ENCODE measurements at regions of chr1 and their contacts with region 1.

Region 1: GRCh38 chr1:112803906-112804762 is 89.0 kb upstream of the PPM1J start:
- DNase-seq: peak; percentile 61
- ATAC-seq: peak; percentile 97
- H3K4me3 ChIP-seq: no peak overlapping the region
- H3K27ac ChIP-seq: no peak overlapping the region
- H3K4me1 ChIP-seq: no peaks in the 10 kb centered on the region
- H3K27me3 ChIP-seq: no peaks in the 10 kb centered on the region
- CTCF ChIP-seq: peak; percentile 93 to 96 (median 93)
- POLR2A ChIP-seq: no peak
- RAD21 ChIP-seq: peak; percentile 100

Region 2: DNA sequence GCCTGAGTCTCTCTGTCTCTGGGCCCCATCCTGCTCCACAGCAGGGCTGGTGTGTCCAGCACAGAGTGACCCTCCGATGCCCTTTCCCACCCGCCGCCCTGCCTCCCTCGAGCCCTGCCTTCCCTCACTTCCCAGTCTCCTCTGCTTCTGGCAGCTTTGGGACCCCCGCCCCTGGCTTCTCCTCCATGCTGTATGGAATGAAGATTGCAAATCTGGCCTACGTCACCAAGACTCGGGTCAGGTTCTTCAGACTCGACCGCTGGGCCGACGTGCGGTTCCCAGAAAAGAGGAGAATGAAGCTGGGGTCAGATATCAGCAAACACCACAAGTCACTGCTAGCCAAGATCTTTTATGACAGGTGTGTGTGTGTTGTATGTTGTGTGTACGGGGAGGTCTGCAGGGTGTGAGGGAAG is 115.3 kb before region 1 on chr1:
- CTCF ChIA-PET with region 1: no interaction called
- POLR2A ChIA-PET with region 1: no interaction called
- RAD21 ChIA-PET with region 1: no interaction called
- intact Hi-C with region 1: no loop called
- DNase-seq: no peak
- ATAC-seq: no peak
- H3K4me3 ChIP-seq: no peak overlapping the region
- H3K27ac ChIP-seq: no peak overlapping the region
- H3K4me1 ChIP-seq: no peaks in the 10 kb centered on the region; a peak in 1 of 4 replicates
- H3K27me3 ChIP-seq: no peaks in the 10 kb centered on the region
- CTCF ChIP-seq: no peak
- POLR2A ChIP-seq: no peak
- RAD21 ChIP-seq: no peak

Region 3: DNA sequence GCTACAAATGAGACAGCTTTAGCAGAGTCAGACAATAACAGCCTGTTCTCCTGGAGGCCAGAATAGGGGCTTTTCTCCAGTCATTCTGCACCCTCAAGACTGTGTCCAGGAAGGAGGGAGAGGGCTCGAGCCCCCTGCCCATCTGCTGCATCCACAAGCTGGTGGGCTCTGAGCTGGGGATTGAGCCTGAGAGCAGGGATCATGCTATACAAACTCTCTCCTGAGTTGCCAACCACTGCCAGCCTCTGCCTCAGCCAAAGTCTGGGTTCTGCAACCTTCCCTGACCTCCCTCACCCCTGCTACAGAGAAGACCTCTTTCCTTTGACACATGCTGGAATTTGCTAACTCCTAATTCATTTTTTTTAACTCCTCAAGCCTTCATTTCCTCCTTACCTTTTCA is 74.2 kb before region 1 on chr1:
- CTCF ChIA-PET with region 1: interaction called, 11 read pairs
- POLR2A ChIA-PET with region 1: no interaction called
- RAD21 ChIA-PET with region 1: no interaction called
- intact Hi-C with region 1: no loop called
- DNase-seq: no peak
- ATAC-seq: no peak
- H3K4me3 ChIP-seq: no peak overlapping the region
- H3K27ac ChIP-seq: no peak overlapping the region
- H3K4me1 ChIP-seq: peaks cover 0 to 7% of the 10 kb centered on the region in 2 experiments; a peak in 2 of 4 replicates
- H3K27me3 ChIP-seq: no peaks in the 10 kb centered on the region
- CTCF ChIP-seq: no peak
- POLR2A ChIP-seq: no peak
- RAD21 ChIP-seq: no peak

Region 4: DNA sequence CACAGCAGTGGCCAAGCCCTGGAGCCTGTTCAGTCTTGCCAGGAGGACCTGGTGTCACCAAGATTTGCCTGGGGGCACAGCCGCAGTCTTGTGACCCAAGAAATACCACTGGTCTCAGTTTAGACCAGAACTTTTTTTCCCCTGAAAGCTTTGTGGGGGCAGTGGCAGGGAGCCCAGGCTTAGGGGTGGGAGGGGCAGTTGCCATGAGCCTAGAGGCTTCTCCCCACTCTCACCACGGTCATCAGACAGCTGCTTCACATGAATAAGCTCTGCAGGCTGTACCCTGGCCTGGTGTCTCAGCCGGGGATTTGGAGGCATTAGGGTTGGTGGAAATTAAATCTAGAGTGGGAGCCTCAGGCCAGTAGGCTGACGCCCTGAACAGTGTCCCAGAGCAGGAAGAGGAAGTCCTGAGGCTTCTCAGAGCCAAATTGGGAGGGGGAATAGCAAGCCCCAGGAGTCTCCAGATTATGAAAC is 78.2 kb after region 1 on chr1:
- CTCF ChIA-PET with region 1: no interaction called
- POLR2A ChIA-PET with region 1: no interaction called
- RAD21 ChIA-PET with region 1: no interaction called
- intact Hi-C with region 1: no loop called
- DNase-seq: no peak
- ATAC-seq: no peak
- H3K4me3 ChIP-seq: no peak overlapping the region
- H3K27ac ChIP-seq: no peak overlapping the region
- H3K4me1 ChIP-seq: no peaks in the 10 kb centered on the region
- H3K27me3 ChIP-seq: no peaks in the 10 kb centered on the region
- CTCF ChIP-seq: no peak
- POLR2A ChIP-seq: no peak
- RAD21 ChIP-seq: no peak